Mammary epithelial cell (primary cell): ENCODE measurements at regions of chr12 and their contacts with region 1.

Region 1: GRCh38 chr12:21677622-21678277 is 20.1 kb upstream of the LDHB start:
- DNase-seq: no peak
- H3K4me3 ChIP-seq: no peak overlapping the region
- H3K27ac ChIP-seq: no peak overlapping the region
- H3K4me1 ChIP-seq: no peaks in the 10 kb centered on the region
- H3K27me3 ChIP-seq: peaks cover 3% of the 10 kb centered on the region
- CTCF ChIP-seq: no peak

Region 2: DNA sequence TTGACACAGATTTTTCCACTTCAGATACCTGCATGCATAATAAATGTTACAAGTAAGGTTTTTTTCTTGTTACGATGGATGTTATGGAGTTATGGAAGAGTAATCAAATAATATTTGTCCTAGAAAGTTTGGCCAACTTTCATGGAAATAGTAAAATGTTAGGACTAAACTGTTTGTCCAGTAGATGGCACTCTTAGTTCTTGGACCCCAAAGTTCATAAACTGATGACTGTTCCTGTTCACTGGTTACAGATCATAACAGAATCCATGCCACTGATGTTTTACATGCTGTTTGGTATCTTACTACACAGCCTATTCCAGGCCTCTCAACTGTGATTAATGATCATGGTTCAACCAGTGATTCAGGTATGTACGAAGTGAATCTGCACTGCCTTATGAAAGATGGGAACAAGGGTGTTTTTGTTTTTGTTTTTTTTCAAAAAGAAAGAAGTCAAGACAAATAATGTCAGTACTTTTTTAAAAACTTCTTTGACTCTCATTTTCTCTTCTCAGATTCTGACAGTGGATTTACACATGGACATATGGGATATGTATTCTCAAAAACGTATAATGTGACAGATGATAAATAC is 1031.4 kb before region 1 on chr12:
- CTCF ChIA-PET with region 1: no interaction called
- dilution Hi-C with region 1: no loop called
- in situ Hi-C with region 1: no loop called
- intact Hi-C with region 1: loop called (anchors 10 kb)
- DNase-seq: peak; percentile 16
- H3K4me3 ChIP-seq: no peak overlapping the region
- H3K27ac ChIP-seq: no peak overlapping the region
- H3K4me1 ChIP-seq: no peaks in the 10 kb centered on the region
- H3K27me3 ChIP-seq: no peaks in the 10 kb centered on the region
- CTCF ChIP-seq: peak; percentile 48 to 54

Region 3: GRCh38 chr12:21248679-21249078 is 429.1 kb before region 1 on chr12:
- CTCF ChIA-PET with region 1: interaction called, 3 read pairs
- dilution Hi-C with region 1: no loop called
- in situ Hi-C with region 1: no loop called
- intact Hi-C with region 1: loop called (anchors 2 kb)
- DNase-seq: no peak
- H3K4me3 ChIP-seq: no peak overlapping the region
- H3K27ac ChIP-seq: no peak overlapping the region
- H3K4me1 ChIP-seq: no peaks in the 10 kb centered on the region
- H3K27me3 ChIP-seq: no peaks in the 10 kb centered on the region
- CTCF ChIP-seq: peak in 1 of 2 donors; percentile 9

Region 4: GRCh38 chr12:21296751-21297406 is 380.9 kb before region 1 on chr12:
- CTCF ChIA-PET with region 1: no interaction called
- dilution Hi-C with region 1: no loop called
- in situ Hi-C with region 1: no loop called
- intact Hi-C with region 1: loop called (anchors 2 kb)
- DNase-seq: peak; percentile 6
- H3K4me3 ChIP-seq: no peak overlapping the region
- H3K27ac ChIP-seq: no peak overlapping the region
- H3K4me1 ChIP-seq: no peaks in the 10 kb centered on the region
- H3K27me3 ChIP-seq: no peaks in the 10 kb centered on the region
- CTCF ChIP-seq: peak; percentile 71 to 73

Region 5: GRCh38 chr12:21501379-21501956 is 176.3 kb before region 1 on chr12 and contains the starts of genes GOLT1B and RECQL:
- CTCF ChIA-PET with region 1: no interaction called
- dilution Hi-C with region 1: no loop called
- in situ Hi-C with region 1: no loop called
- intact Hi-C with region 1: loop called (anchors 2 kb)
- DNase-seq: peak; percentile 97
- H3K4me3 ChIP-seq: peak within 1 kb of the TSS; percentile 81 to 96 (median 90)
- H3K27ac ChIP-seq: peak within 1 kb of the TSS; percentile 78
- H3K4me1 ChIP-seq: peaks cover 16% of the 10 kb centered on the region
- H3K27me3 ChIP-seq: no peaks in the 10 kb centered on the region
- CTCF ChIP-seq: no peak
- total RNA-seq, gene GOLT1B: 38.2 to 46.7 TPM
- total RNA-seq, gene RECQL: 55.3 to 57.9 TPM

Region 6: GRCh38 chr12:21607701-21608100 is 70.0 kb before region 1 on chr12:
- CTCF ChIA-PET with region 1: no interaction called
- dilution Hi-C with region 1: no loop called
- in situ Hi-C with region 1: no loop called
- intact Hi-C with region 1: loop called (anchors 1 kb)
- DNase-seq: no peak
- H3K4me3 ChIP-seq: no peak overlapping the region
- H3K27ac ChIP-seq: no peak overlapping the region
- H3K4me1 ChIP-seq: no peaks in the 10 kb centered on the region
- H3K27me3 ChIP-seq: no peaks in the 10 kb centered on the region
- CTCF ChIP-seq: peak; percentile 16 to 39

Region 7: DNA sequence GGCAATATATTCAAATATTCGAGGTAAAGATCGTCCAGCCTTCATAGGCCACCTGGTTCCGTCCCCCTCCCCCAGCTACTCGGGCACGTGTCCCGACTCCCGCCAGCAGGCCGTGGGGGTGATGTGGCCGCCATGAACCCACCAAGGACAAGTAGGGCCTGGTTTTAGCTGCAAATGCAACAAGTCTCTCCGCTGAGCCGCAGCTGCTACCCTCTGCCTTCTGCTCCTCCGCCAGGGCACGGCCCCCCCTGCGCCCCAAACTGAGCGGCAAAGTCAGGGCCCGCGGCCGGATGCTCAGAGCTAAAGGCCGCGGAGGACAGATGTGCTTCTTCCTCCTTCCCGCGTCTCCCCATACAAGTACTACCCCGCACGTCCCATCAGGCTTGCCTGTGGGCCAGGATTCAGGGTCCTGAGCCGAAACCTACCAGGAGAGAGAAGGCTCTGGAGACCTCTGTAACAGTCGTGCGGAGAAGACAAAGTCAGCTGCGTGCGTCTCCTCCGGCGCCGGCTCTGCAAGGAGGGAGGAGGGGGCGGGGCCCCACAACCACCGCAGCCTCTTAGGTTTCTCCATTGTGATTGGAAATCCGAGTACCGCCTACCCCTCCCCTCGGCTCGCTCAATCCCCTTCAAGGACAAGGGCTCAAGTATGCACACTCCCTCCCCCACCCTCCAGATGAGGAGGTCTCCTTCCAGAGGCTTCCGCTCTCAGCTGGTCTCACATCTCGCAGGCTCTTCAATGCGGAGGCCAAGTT is 20.2 kb before region 1 on chr12 and contains the start of gene LDHB:
- CTCF ChIA-PET with region 1: no interaction called
- dilution Hi-C with region 1: no loop called
- in situ Hi-C with region 1: no loop called
- intact Hi-C with region 1: loop called (anchors 2 kb)
- DNase-seq: peak; percentile 83
- H3K4me3 ChIP-seq: peak within 1 kb of the TSS; percentile 86 to 97 (median 96)
- H3K27ac ChIP-seq: peak within 1 kb of the TSS; percentile 69
- H3K4me1 ChIP-seq: peaks cover 6% of the 10 kb centered on the region
- H3K27me3 ChIP-seq: no peaks in the 10 kb centered on the region
- CTCF ChIP-seq: no peak
- total RNA-seq, gene LDHB: 257 to 513 TPM

Region 8: GRCh38 chr12:22064968-22065367 is 387.2 kb after region 1 on chr12:
- CTCF ChIA-PET with region 1: no interaction called
- dilution Hi-C with region 1: no loop called
- in situ Hi-C with region 1: no loop called
- intact Hi-C with region 1: no loop called
- DNase-seq: no peak
- H3K4me3 ChIP-seq: no peak overlapping the region
- H3K27ac ChIP-seq: no peak overlapping the region
- H3K4me1 ChIP-seq: no peaks in the 10 kb centered on the region
- H3K27me3 ChIP-seq: no peaks in the 10 kb centered on the region
- CTCF ChIP-seq: no peak